Activated T-helper 2 cell treated with anti-CD3 and anti-CD28 coated beads, Interferon-gamma antibody, Interleukin-2, Interleukin-4, amounts not matched to agents 10 μg/mL and 5 μg/mL and 100 μg/mL, durations not matched to agents 14 hours and 24 hours and 36 hours (primary cell): ENCODE measurements at regions of chr3 and their contacts with region 1.

Region 1: GRCh38 chr3:40971191-40972168 is 227.8 kb upstream of the CTNNB1 start:
- DNase-seq: peak; percentile 18
- H3K4me3 Mint-ChIP-seq: peak overlapping the region; percentile 77
- H3K27ac Mint-ChIP-seq: peak overlapping the region; percentile 100
- H3K4me1 Mint-ChIP-seq: peaks cover 74% of the 10 kb centered on the region
- H3K27me3 Mint-ChIP-seq: no peaks in the 10 kb centered on the region

Region 2: GRCh38 chr3:40337136-40338108 is 634.1 kb before region 1 on chr3:
- intact Hi-C with region 1: loop called (anchors 5 kb)
- DNase-seq: no peak
- H3K4me3 Mint-ChIP-seq: no peak overlapping the region
- H3K27ac Mint-ChIP-seq: peak overlapping the region; percentile 87
- H3K4me1 Mint-ChIP-seq: peaks cover 19% of the 10 kb centered on the region
- H3K27me3 Mint-ChIP-seq: peaks cover 2% of the 10 kb centered on the region

Region 3: DNA sequence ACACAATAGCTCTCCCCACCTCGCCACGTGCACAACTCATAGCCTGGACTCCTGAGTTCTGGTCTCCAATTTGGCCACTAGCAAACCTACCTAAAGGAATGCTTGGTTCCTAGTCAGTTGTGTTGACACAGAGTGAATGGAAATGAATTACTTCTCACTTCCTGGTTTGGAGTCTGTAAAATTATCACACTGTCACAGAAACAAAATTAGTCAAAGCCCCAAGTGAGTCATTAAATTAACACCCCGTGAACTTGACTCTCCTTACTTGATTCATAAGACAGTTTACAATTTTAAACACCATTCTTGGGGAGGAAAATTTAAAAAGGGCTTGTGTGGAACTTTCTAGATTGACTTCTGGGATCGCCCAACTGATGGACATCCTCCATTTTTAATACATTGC is 48.3 kb before region 1 on chr3:
- intact Hi-C with region 1: loop called (anchors 2 kb)
- DNase-seq: no peak
- H3K4me3 Mint-ChIP-seq: no peak overlapping the region
- H3K27ac Mint-ChIP-seq: no peak overlapping the region
- H3K4me1 Mint-ChIP-seq: peaks cover 6% of the 10 kb centered on the region
- H3K27me3 Mint-ChIP-seq: peaks cover 1% of the 10 kb centered on the region

Region 4: GRCh38 chr3:41095702-41096101 is 124.2 kb after region 1 on chr3:
- intact Hi-C with region 1: no loop called
- DNase-seq: no peak
- H3K4me3 Mint-ChIP-seq: no peak overlapping the region
- H3K27ac Mint-ChIP-seq: no peak overlapping the region
- H3K4me1 Mint-ChIP-seq: no peaks in the 10 kb centered on the region
- H3K27me3 Mint-ChIP-seq: no peaks in the 10 kb centered on the region

Region 5: GRCh38 chr3:41117398-41117870 is 146.0 kb after region 1 on chr3:
- intact Hi-C with region 1: loop called (anchors 2 kb)
- DNase-seq: peak; percentile 76
- H3K4me3 Mint-ChIP-seq: no peak overlapping the region
- H3K27ac Mint-ChIP-seq: peak overlapping the region; percentile 83
- H3K4me1 Mint-ChIP-seq: peaks cover 21% of the 10 kb centered on the region
- H3K27me3 Mint-ChIP-seq: no peaks in the 10 kb centered on the region

Region 6: GRCh38 chr3:41198950-41199865 is 227.7 kb after region 1 on chr3 and contains the start of gene CTNNB1:
- intact Hi-C with region 1: loop called (anchors 1 kb)
- DNase-seq: peak; percentile 89
- H3K4me3 Mint-ChIP-seq: peak within 1 kb of the TSS; percentile 99
- H3K27ac Mint-ChIP-seq: peak within 1 kb of the TSS; percentile 98
- H3K4me1 Mint-ChIP-seq: peaks cover 35% of the 10 kb centered on the region
- H3K27me3 Mint-ChIP-seq: peaks cover 22% of the 10 kb centered on the region
- total RNA-seq, gene CTNNB1: 230 and 238 TPM in 2 replicates

Region 7: GRCh38 chr3:41961750-41962679 is 990.5 kb after region 1 on chr3 and contains the start of gene ULK4:
- intact Hi-C with region 1: loop called (anchors 10 kb)
- DNase-seq: peak; percentile 94
- H3K4me3 Mint-ChIP-seq: peak within 1 kb of the TSS; percentile 96
- H3K27ac Mint-ChIP-seq: peak within 1 kb of the TSS; percentile 90
- H3K4me1 Mint-ChIP-seq: peaks cover 19% of the 10 kb centered on the region
- H3K27me3 Mint-ChIP-seq: peaks cover under 1% of the 10 kb centered on the region
- total RNA-seq, gene ULK4: 7.5 and 8.1 TPM in 2 replicates